Right ventricle myocardium superior (tissue), 1 donor: ENCODE measurements at regions of chr10 and their contacts with region 1.

Region 1: GRCh38 chr10:77846718-77847630 is 79.6 kb downstream of the DLG5 start:
- DNase-seq: peak; percentile 84
- ATAC-seq: peak; percentile 89

Region 2: DNA sequence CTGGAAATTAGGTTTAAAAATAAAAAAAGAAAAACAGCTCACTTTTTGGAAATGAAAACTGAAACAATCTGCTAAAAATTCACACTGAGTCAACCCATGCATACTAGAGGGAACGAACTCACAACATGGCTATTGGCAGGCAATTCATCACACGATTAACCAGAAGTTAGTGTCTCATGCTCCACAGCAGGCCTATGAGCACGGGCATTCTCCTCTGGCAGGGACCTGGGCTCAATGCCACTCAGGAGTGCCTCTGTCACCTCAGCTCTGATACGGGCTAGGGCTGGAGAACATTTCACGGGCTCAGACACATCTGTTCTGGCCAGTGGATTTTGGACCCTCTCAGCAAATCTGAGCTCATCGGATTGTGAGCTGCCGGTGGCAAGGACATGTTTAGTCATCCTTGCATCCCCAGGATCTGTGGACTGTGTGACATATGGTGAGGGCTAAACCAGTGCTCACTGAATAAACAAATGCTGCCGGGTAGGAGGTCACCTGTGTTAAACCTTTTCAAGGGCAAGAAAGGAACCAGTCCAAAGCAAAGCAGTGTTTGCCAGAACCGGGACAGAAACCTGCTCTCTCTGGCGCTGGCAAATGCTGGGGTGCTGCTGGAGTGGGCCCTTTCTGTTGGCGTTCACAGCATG is 142.2 kb after region 1 on chr10:
- intact Hi-C with region 1: loop called (anchors 5 kb)
- DNase-seq: peak; percentile 71
- ATAC-seq: peak; percentile 97

Region 3: DNA sequence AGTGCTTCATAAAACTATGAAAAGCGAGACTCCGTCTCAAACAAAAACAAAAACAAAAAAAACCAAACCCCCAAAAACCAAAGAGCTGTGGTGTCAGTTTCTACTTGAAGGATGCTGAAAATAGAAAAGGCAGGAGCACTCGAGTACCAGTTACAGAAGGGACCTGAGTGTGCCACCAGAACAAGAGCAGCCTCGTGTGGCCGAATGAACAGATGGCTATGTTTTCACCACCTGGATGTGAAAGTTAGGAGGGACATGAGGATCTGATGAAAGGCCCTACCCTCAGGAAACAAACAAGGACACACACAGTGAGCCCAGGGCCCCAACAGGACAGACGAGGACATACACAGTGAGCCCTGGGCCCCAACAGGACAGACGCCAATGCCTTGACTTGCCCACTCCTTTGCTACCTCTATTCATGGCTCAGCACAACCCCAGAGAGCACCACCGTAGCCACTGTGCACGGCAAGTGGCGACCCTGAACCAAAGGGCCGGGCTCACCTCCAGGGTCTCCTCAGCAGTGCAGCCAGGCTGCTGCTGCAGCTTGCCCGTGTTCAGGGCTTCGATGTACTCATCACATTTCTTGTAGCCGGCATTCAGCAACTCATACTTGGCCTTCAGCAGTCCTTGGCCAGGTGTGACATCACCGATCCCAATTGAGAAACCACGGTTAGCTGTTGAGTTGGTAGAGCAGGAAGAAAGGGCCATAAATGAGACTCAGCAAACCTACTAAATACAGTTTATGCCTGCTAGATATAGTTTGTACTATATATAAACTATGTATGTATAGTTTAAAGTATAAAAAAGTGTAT is 157.4 kb after region 1 on chr10:
- intact Hi-C with region 1: loop called (anchors 5 kb)
- DNase-seq: no peak
- ATAC-seq: peak; percentile 60

Region 4: GRCh38 chr10:78053211-78053868 is 206.4 kb after region 1 on chr10:
- intact Hi-C with region 1: no loop called
- DNase-seq: no peak
- ATAC-seq: no peak